Mammary epithelial cell (primary cell): ENCODE measurements at regions of chr6 and their contacts with region 1.

Region 1: DNA sequence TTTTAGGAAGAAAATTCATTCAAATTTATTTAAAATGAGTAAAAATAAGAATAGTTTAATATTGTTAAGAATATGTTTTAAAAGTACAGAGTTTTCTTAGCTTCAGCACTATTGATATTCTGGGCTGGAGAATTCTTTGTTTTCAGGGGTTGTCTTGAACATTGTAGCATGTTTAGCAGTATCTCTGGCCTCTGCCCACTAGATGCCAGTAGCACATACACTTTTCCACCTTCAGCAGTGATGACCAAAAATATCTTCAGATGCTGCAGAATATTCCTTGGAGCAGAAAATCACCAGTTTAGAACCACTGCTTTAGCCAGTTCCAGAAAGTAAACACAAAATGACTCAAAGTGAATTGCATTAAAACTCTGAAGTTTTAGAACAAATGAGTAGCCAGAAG is 19.4 kb upstream of the SDHAF4 start:
- DNase-seq: no peak
- H3K4me3 ChIP-seq: no peak overlapping the region
- H3K27ac ChIP-seq: no peak overlapping the region
- H3K4me1 ChIP-seq: no peaks in the 10 kb centered on the region
- H3K27me3 ChIP-seq: no peaks in the 10 kb centered on the region
- CTCF ChIP-seq: peak; percentile 23 to 50

Region 2: DNA sequence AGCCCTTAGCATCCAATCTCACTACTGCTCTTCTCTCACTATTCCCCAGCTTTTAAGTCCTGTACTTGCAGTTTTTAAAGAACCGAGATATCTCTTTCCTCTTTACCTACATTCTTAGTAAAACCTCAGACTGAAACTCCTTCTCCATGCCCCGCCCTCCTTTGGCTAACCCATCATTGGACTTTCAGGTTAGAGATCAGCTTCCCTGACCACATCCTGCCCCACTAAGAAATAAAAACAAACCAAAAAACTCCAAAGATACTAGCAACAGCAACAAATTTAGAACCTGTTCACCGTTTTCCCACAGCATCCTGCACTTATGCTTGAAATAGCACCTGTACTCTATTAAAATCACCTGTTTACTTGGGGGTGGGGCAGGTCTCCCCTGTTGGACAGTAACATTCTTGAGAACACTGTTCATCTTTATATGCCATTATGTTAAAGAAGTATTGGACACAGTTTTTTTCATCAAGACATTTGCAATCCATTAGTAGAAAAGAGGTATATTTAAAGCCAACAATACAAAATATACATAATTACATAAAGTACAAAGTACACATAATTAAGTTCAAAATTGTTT is 104.1 kb after region 1 on chr6:
- CTCF ChIA-PET with region 1: no interaction called
- dilution Hi-C with region 1: no loop called
- in situ Hi-C with region 1: no loop called
- intact Hi-C with region 1: no loop called
- DNase-seq: peak; percentile 46
- H3K4me3 ChIP-seq: no peak overlapping the region
- H3K27ac ChIP-seq: no peak overlapping the region
- H3K4me1 ChIP-seq: no peaks in the 10 kb centered on the region
- H3K27me3 ChIP-seq: no peaks in the 10 kb centered on the region
- CTCF ChIP-seq: no peak

Region 3: DNA sequence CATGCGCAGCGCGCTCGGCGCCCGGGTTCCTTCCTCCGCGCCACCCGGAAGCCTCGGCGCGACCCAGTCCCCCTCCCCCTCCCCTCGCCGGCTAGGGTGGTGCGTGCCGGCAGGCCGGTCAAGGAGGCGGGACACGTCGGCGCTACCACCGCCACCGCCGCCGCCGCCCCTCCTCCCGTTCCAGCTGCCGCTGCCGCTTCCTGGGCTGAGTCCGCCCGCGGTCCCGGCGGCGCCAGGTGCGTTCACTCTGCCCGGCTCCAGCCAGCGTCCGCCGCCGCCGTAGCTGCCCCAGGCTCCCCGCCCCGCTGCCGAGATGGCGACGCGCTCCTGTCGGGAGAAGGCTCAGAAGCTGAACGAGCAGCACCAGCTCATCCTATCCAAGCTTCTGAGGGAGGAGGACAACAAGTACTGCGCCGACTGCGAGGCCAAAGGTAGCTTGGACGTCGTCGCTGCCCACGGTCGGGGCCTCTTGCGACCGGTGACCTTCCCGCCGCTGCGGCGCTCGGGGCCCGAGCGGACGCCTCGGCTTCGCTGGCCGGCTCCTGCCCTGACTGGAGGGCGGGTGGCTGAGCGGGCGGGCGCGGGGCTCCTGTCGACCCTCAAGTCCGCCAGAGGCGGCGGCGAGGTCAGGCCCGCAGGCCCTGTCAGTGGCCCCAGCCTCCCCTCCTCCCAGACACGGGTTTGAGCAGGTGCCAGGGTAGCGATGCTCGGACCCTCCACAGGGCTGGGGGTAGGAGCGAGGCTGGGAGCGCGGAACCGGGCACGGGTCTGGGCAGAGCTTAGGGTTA is 120.6 kb after region 1 on chr6 and contains the start of gene SMAP1:
- CTCF ChIA-PET with region 1: interaction called, 18 read pairs
- dilution Hi-C with region 1: no loop called
- in situ Hi-C with region 1: no loop called
- intact Hi-C with region 1: no loop called
- DNase-seq: peak; percentile 90
- H3K4me3 ChIP-seq: peak within 1 kb of the TSS; percentile 77 to 97 (median 92)
- H3K27ac ChIP-seq: peak within 1 kb of the TSS; percentile 45
- H3K4me1 ChIP-seq: peaks cover 13% of the 10 kb centered on the region
- H3K27me3 ChIP-seq: no peaks in the 10 kb centered on the region
- CTCF ChIP-seq: no peak
- total RNA-seq, gene SMAP1: 20.2 to 22.1 TPM